GM12878 (cell line): ENCODE measurements at regions of chr3 and their contacts with region 1.

Region 1: DNA sequence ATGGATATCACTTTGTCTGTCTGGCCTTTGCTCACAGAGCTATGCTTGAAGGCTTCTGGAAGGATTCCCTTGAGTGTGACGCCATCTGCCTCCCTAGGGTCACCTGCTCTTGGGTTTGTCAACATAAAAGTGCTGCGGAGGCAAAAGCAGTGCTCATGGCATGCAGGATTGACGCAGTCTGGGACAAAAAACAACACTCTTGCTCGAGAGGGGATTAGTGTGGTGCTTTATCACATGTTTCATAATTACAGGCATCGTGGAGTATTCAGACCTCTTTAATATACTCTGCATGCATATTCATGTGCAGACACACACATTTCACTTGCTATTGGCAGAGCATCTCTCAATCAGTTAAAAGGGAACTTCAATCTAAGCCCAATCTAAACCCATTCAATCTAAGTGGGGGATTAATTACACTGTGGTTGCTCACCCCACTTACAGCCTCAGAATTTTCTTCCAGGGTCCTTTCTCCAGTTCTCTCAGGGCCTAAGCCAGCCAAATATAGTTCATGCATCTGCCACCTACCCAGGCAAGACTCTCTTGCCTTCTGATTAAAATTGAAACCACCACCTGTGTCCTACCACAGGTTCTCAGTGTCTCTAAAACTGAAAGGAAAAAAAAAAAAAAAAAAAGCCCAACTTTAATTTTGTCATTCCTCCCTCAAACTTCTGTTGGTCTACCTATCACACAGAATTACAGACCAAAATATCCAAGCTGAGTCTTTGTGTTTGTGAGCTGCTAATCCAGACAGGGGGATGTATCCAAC is 75.6 kb downstream of the BFSP2 start:
- DNase-seq: peak; percentile 89
- ATAC-seq: peak; percentile 88
- H3K4me3 ChIP-seq: peak overlapping the region; percentile 40; the same call in 1 of the 2 replicates
- H3K27ac ChIP-seq: peak overlapping the region; percentile 97
- H3K4me1 ChIP-seq: peaks cover 69% of the 10 kb centered on the region
- H3K27me3 ChIP-seq: no peaks in the 10 kb centered on the region
- CTCF ChIP-seq: peak in 1 of 3 experiments; percentile 10; a peak in 1 of 6 replicates
- EP300 ChIP-seq: peak; percentile 80 to 94
- POLR2A ChIP-seq: no peak
- RAD21 ChIP-seq: peak; percentile 12; the same call in 1 of the 2 replicates

Region 2: GRCh38 chr3:133457465-133458067 is 17.9 kb before region 1 on chr3:
- CTCF ChIA-PET with region 1: interaction called, 18 read pairs
- POLR2A ChIA-PET with region 1: interaction called, 5 read pairs
- RAD21 ChIA-PET with region 1: interaction called, 6 read pairs
- SMC1A ChIA-PET with region 1: interaction called, 380 read pairs
- in situ Hi-C with region 1: no loop called
- intact Hi-C with region 1: no loop called
- DNase-seq: no peak
- ATAC-seq: peak; percentile 64
- H3K4me3 ChIP-seq: no peak overlapping the region
- H3K27ac ChIP-seq: no peak overlapping the region
- H3K4me1 ChIP-seq: peaks cover 3% of the 10 kb centered on the region; the same call in 1 of the 2 replicates
- H3K27me3 ChIP-seq: no peaks in the 10 kb centered on the region
- CTCF ChIP-seq: peak; percentile 3 to 41 (median 24); a peak in 2 of 6 replicates
- EP300 ChIP-seq: no peak
- POLR2A ChIP-seq: no peak
- RAD21 ChIP-seq: peak; percentile 47

Region 3: GRCh38 chr3:133487920-133488540 is 12.6 kb after region 1 on chr3:
- CTCF ChIA-PET with region 1: interaction called, 44 read pairs
- POLR2A ChIA-PET with region 1: interaction called, 8 read pairs
- RAD21 ChIA-PET with region 1: interaction called, 15 read pairs
- SMC1A ChIA-PET with region 1: interaction called, 53 read pairs
- in situ Hi-C with region 1: no loop called
- intact Hi-C with region 1: no loop called
- DNase-seq: no peak
- ATAC-seq: no peak
- H3K4me3 ChIP-seq: no peak overlapping the region; the same call in 1 of the 2 replicates
- H3K27ac ChIP-seq: no peak overlapping the region
- H3K4me1 ChIP-seq: peaks cover 48% of the 10 kb centered on the region
- H3K27me3 ChIP-seq: no peaks in the 10 kb centered on the region
- CTCF ChIP-seq: peak; percentile 26 to 36 (median 35); a peak in 3 of 6 replicates
- EP300 ChIP-seq: no peak
- POLR2A ChIP-seq: no peak
- RAD21 ChIP-seq: peak; percentile 57

Region 4: DNA sequence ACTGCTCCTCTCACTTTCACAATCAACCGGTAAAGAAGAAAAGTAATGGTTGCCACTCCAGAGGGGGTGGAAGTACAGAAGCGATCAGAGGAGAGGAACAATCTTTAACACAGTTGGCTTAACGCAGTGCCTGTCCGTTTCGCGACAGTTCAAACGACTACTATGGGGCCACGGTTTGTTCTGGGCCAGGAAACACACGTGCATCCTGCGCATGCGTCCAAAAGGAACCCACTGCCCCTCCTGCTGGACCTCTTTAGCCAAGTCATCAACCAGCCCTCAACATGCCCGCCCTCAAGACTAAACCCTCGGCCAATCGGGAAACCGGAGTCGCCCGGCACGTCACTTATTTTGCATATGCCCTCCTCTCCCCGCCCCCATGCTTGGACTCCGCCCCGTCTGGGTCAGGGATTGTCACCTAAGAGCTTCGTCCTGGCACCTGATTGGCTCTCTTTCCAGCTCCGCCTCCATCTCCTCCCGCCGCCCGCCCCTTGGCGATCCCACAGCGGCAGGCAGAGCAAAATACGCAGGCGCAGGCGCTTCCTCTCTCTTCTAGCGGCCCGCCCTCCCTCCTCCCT is 97.7 kb after region 1 on chr3:
- CTCF ChIA-PET with region 1: interaction called, 17 read pairs
- POLR2A ChIA-PET with region 1: interaction called, 38 read pairs
- RAD21 ChIA-PET with region 1: interaction called, 137 read pairs
- SMC1A ChIA-PET with region 1: interaction called, 25 read pairs
- in situ Hi-C with region 1: no loop called
- intact Hi-C with region 1: loop called (anchors 2 kb)
- DNase-seq: peak; percentile 99
- ATAC-seq: peak; percentile 83
- H3K4me3 ChIP-seq: peak overlapping the region; percentile 73
- H3K27ac ChIP-seq: peak overlapping the region; percentile 97
- H3K4me1 ChIP-seq: peaks cover 18% of the 10 kb centered on the region
- H3K27me3 ChIP-seq: no peaks in the 10 kb centered on the region
- CTCF ChIP-seq: peak in 2 of 3 experiments; percentile 3 to 14; a peak in 2 of 6 replicates
- EP300 ChIP-seq: no peak
- POLR2A ChIP-seq: no peak; the same call in 1 of the 2 replicates
- RAD21 ChIP-seq: no peak

Region 5: DNA sequence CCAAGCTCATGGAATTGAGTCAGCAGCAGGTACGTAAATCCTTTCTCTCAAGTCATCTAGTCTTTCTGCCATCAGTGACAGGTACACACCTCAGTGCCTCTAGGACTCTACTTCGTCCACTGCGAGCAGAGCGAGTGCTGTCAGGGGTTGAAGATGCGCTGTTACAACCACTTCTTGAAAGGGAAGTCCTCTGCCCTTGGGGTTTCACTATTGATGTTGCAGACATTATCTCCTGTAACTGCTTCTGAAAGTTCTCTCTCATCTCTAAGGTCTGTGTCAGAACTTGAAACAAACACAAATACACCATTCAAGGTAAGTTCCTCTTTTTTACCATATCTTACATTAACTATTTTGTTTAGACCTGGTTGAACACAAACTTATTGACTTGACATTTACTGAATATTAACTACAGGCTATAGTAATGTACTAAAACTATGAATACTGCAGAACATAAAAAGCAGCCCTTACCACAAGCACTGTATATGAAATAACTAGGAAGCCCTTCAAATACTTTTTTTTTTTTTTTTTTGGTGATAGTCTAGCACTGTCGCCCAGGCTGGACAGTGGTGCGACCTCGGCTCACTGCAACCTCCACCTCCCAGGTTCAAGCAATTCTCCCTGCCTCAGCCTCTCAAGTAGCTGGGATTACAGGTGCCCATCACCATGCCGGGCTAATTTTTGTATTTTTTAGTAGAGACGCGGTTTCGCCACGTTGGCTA is 144.8 kb after region 1 on chr3:
- CTCF ChIA-PET with region 1: no interaction called
- POLR2A ChIA-PET with region 1: no interaction called
- RAD21 ChIA-PET with region 1: no interaction called
- SMC1A ChIA-PET with region 1: interaction called, 3 read pairs
- in situ Hi-C with region 1: no loop called
- intact Hi-C with region 1: loop called (anchors 5 kb)
- DNase-seq: peak; percentile 94
- ATAC-seq: peak; percentile 99
- H3K4me3 ChIP-seq: no peak overlapping the region
- H3K27ac ChIP-seq: peak overlapping the region; percentile 56; the same call in 1 of the 2 replicates
- H3K4me1 ChIP-seq: peaks cover 20% of the 10 kb centered on the region
- H3K27me3 ChIP-seq: no peaks in the 10 kb centered on the region
- CTCF ChIP-seq: no peak
- EP300 ChIP-seq: no peak
- POLR2A ChIP-seq: no peak
- RAD21 ChIP-seq: no peak